Common myeloid progenitor, CD34-positive (primary cell): ENCODE measurements at regions of chr16 and their contacts with region 1.

Region 1: DNA sequence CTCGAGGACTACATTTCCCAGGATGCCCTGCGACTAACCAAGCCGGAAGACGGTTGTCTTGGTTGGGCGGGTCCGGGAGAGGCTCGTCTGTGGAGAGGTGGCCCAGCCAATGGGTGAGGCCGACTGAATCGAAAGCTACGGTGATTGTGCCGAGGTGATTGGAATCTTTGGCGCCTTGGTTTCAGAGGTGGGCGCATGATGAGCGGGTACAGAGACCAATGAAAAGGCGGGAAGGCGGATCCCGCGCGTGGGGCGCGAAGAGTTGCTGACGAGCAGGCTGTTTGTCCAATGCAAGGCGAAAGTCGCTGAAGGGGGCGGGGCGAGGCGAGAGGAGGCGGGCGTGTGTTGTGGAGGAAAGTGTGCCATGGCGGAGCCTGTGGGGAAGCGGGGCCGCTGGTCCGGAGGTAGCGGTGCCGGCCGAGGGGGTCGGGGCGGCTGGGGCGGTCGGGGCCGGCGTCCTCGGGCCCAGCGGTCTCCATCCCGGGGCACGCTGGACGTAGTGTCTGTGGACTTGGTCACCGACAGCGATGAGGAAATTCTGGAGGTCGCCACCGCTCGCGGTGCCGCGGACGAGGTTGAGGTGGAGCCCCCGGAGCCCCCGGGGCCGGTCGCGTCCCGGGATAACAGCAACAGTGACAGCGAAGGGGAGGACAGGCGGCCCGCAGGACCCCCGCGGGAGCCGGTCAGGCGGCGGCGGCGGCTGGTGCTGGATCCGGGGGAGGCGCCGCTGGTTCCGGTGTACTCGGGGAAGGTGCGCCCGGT is at the start of gene NFATC2IP:
- DNase-seq: peak; percentile 100
- H3K4me3 ChIP-seq: peak within 1 kb of the TSS; percentile 70 to 92 (median 82)
- H3K27ac ChIP-seq: peak within 1 kb of the TSS; percentile 7 to 82
- H3K4me1 ChIP-seq: peaks cover 3 to 18% (median 15%) of the 10 kb centered on the region in 4 experiments
- H3K27me3 ChIP-seq: no peaks in the 10 kb centered on the region

Region 2: GRCh38 chr16:28873536-28874201 is 77.2 kb before region 1 on chr16:
- CTCF ChIA-PET with region 1: interaction called, 24 read pairs
- POLR2A ChIA-PET with region 1: no interaction called
- DNase-seq: peak; percentile 44 to 70 (median 61)
- H3K4me3 ChIP-seq: no peak overlapping the region
- H3K27ac ChIP-seq: no peak overlapping the region
- H3K4me1 ChIP-seq: peaks cover 0 to 18% (median under 1%) of the 10 kb centered on the region in 4 experiments
- H3K27me3 ChIP-seq: no peaks in the 10 kb centered on the region

Region 3: DNA sequence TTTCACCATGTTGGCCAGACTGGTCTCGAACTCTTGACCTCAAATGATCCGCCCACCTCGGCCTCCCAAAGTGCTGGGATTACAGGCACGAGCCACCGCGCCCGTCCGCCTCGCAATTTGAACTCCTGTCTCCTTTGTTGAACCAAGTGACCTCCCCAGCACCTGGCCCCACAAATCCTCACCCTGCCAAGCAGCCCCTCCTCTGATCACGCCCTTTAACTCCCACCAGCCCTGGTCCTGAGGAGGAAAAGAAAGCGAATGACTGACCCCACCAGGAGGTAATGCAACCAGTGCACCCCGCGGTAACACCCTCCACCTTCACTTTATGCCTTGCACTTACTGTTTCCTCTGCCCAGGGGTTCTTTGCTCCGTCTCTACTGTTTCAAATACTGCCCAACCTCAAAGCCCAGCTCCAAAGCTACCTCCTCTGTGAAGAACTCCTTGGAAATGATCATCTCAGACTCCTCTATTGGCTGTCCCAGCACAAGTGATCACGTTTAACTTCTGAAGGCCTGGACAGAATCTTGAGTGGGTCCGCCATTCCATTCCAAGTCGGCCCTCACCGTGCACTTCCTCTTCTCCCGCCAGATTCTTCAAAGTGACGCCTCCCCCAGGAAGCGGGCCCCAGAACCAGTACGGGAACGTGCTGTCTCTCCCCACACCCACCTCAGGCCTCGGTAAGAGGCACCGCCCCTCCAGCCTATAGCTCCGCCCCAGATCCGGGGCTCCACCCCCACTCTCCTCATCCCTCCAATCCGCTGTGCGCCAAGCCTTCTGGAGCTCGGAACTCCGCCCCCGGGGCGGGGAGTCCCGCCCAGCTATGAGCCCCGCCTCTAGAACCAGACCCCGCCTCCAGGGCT is 14.7 kb before region 1 on chr16:
- CTCF ChIA-PET with region 1: interaction called, 21 read pairs
- POLR2A ChIA-PET with region 1: no interaction called
- DNase-seq: peak; percentile 91 to 95 (median 94)
- H3K4me3 ChIP-seq: peak overlapping the region; percentile 22 to 79 (median 62)
- H3K27ac ChIP-seq: peak overlapping the region in 1 of 2 experiments; percentile 39
- H3K4me1 ChIP-seq: peaks cover 0 to 32% (median 10%) of the 10 kb centered on the region in 4 experiments
- H3K27me3 ChIP-seq: no peaks in the 10 kb centered on the region

Region 4: DNA sequence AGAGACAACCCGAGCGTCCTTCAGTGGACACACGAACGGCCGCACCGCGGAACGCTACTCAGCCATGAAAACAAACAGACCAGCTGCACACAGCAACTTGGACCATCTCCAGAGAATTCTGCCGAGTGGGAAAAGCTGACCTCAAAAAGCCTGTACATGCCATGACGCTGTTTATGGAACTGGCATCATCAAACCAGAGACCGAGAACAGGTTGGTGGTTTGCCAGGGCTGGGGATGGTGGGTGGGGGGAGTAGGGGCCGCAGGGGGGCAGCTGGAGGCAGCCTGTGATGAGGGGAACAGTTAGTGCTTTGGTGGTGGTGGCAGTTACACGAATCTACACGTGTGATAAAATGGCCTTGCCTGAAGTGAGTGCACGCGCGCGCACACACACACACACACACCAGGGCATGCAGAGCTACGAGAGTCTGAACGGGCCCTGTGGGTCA is 203.9 kb after region 1 on chr16:
- CTCF ChIA-PET with region 1: no interaction called
- POLR2A ChIA-PET with region 1: no interaction called
- DNase-seq: peak; percentile 34 to 53 (median 38)
- H3K4me3 ChIP-seq: peak overlapping the region in 4 of 7 experiments; percentile 19 to 66 (median 49)
- H3K27ac ChIP-seq: peak overlapping the region in 1 of 2 experiments; percentile 100
- H3K4me1 ChIP-seq: peaks cover 0 to 79% (median 53%) of the 10 kb centered on the region in 4 experiments
- H3K27me3 ChIP-seq: no peaks in the 10 kb centered on the region